PC-3 (cell line): ENCODE measurements at regions of chr11 and their contacts with region 1.

Region 1: GRCh38 chr11:133834682-133835592 is 10.4 kb downstream of the SPATA19 start:
- DNase-seq: peak; percentile 65
- ATAC-seq: peak; percentile 56; the same call in 1 of the 2 replicates
- H3K4me3 ChIP-seq: no peak overlapping the region
- H3K27ac ChIP-seq: no peak overlapping the region
- H3K4me1 ChIP-seq: no peaks in the 10 kb centered on the region
- H3K27me3 ChIP-seq: 0 out of 2 replicates have a peak, but pooled peaks cover under 1% of the 10 kb centered on the region
- CTCF ChIP-seq: peak; percentile 54

Region 2: DNA sequence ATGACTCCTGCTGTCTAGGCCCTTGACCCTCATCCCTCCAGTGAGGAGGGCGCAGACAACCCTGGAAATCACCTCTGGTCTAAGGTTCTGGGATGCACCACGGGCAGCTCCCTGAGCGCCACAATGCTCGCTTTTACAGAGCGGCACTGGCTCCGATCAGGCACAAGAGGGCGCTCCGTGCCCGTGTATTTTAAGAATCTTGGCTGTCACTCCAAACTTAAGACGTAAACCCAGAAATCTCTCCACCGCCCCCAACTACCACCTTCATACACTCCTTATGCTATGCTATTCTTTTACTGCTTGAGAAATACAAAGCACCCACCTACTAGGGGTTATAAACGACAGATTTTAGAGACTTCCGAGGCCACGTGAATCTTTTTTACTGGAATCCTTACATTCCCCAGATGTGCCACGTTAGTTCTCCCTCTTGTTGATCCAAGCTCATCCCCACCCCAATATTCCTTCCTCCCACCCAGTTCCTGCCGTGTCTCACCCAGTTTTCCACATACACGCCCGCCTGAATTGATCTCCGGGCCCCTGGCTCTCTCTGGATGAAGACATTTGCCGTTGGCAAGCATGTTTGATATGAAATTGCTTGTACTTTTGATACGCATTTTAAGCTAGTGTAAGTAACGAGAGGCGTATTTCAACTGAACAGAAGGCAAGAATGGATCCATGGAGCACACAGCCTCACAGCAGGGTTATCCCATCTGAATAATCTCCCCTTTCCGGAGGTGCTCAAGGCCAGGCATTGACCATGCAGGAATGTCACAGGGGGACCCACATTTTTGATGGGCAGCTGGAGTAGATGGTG is 756.1 kb before region 1 on chr11:
- CTCF ChIA-PET with region 1: no interaction called
- POLR2A ChIA-PET with region 1: no interaction called
- intact Hi-C with region 1: loop called (anchors 2 kb)
- DNase-seq: peak; percentile 64
- ATAC-seq: peak; percentile 86
- H3K4me3 ChIP-seq: no peak overlapping the region
- H3K27ac ChIP-seq: no peak overlapping the region
- H3K4me1 ChIP-seq: no peaks in the 10 kb centered on the region
- H3K27me3 ChIP-seq: peaks cover 54% of the 10 kb centered on the region
- CTCF ChIP-seq: peak; percentile 92

Region 3: GRCh38 chr11:133134314-133135173 is 700.4 kb before region 1 on chr11:
- CTCF ChIA-PET with region 1: interaction called, 5 read pairs
- POLR2A ChIA-PET with region 1: no interaction called
- intact Hi-C with region 1: loop called (anchors 5 kb)
- DNase-seq: peak; percentile 30
- ATAC-seq: no peak
- H3K4me3 ChIP-seq: no peak overlapping the region
- H3K27ac ChIP-seq: no peak overlapping the region
- H3K4me1 ChIP-seq: no peaks in the 10 kb centered on the region
- H3K27me3 ChIP-seq: no peaks in the 10 kb centered on the region
- CTCF ChIP-seq: peak; percentile 71